CD8-positive, alpha-beta T cell (primary cell): ENCODE measurements at regions of chr9 and their contacts with region 1.

Region 1: DNA sequence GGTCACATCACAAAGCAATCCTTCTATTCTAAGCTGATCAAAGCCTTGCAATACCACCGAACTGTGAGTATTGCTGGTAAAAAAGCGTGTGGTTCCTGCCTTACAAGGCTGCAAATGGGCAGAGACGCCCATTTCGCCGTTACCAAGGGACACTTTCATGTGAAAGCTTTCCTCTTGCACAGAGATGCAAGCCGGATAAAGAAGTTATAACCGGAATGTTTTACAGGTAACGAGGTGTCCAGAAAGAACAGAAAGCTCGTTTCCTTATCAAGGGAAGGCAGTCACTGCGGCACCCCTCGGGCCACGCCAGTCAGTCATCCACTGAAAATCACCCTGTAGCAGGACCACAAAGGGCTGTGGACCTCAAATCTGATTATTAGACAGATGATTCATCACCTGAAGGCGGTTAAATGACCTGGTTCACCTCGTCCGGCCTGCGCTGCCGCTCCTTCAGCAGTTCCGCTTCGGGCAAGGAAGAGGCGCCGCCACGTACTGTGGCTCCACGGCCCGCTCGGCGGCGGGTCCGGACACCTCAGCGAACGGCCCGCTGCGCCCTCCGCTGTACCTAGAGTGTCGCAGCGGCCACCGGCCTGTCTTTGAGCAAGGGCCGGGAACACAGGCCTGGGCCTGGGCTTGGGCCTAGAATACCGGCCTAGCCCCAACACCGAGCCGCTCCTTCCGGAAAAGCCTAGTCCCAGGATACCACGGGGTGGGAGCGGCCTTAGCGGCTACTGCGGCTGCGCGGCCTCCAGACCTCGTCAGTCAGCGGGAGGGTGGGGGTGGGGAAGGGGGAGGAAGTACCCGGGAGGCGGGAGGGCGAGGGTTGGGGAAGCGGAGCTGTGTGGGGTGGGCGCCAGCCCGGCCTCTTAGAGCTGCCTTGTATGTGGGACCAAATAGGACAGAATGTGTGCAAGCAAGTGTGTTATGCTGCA is at the start of gene KLHL9:
- DNase-seq: peak; percentile 64 to 94 (median 86)
- ATAC-seq: peak; percentile 84
- H3K4me3 ChIP-seq: peak within 1 kb of the TSS; percentile 67 to 88
- H3K4me3 Mint-ChIP-seq: peak within 1 kb of the TSS; percentile 92
- H3K27ac ChIP-seq: peak within 1 kb of the TSS; percentile 93 to 96
- H3K27ac Mint-ChIP-seq: peak within 1 kb of the TSS; percentile 96
- H3K4me1 ChIP-seq: peaks cover 45% of the 10 kb centered on the region
- H3K4me1 Mint-ChIP-seq: peaks cover 56% of the 10 kb centered on the region
- H3K27me3 ChIP-seq: no peaks in the 10 kb centered on the region
- H3K27me3 Mint-ChIP-seq: no peaks in the 10 kb centered on the region
- CTCF ChIP-seq: no peak
- total RNA-seq, gene KLHL9: 11.2 to 11.4 TPM

Region 2: DNA sequence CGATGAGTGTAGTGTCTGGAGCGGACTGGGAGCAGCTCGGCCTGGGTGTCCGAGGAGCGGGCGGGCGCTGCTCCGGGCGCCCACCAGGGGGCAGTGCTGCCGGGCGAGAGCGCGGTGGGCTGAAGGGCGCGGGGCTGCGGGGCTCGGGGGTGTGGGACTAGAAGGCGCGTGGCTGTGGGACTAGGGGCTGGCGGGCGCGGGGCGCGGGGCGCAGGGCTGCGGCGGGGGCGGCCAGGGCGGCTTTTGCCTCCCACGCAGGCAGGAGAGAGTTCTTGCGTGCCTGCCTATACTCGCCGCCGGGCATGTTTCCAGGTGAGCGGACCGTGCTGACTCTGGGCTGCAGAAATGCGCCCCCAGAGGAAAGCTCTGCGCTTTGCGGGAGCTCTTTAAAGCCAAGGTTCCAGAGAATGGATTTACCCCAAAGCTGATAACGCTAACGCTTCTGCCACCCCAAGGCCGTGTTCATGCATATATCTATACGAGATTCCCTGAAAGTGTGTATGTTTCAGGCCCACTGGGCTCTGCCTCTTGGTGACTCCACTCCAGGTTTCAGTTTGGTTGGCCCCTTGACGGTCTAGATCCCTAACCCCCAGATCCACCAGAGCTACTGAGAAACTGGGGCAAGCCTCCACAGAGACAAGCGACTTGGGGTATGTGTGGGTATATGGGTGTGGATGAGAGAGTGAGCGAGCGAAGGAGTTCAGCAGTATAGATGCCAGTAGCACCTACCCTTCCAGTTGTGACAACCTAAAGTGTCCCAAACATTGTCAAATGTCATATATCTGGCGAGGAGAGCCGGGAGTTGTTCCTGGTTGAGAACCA is 1870.0 kb before region 1 on chr9:
- CTCF ChIA-PET with region 1: no interaction called
- POLR2A ChIA-PET with region 1: no interaction called
- intact Hi-C with region 1: loop called in 1 of 2 experiments (anchors 5 kb)
- DNase-seq: peak; percentile 44 to 83 (median 71)
- ATAC-seq: peak; percentile 91
- H3K4me3 ChIP-seq: peak overlapping the region; percentile 35 to 56
- H3K4me3 Mint-ChIP-seq: peak overlapping the region; percentile 89
- H3K27ac ChIP-seq: no peak overlapping the region
- H3K27ac Mint-ChIP-seq: no peak overlapping the region
- H3K4me1 ChIP-seq: peaks cover 7% of the 10 kb centered on the region
- H3K4me1 Mint-ChIP-seq: peaks cover 10% of the 10 kb centered on the region
- H3K27me3 ChIP-seq: no peaks in the 10 kb centered on the region
- H3K27me3 Mint-ChIP-seq: peaks cover 2% of the 10 kb centered on the region
- CTCF ChIP-seq: peak; percentile 80

Region 3: DNA sequence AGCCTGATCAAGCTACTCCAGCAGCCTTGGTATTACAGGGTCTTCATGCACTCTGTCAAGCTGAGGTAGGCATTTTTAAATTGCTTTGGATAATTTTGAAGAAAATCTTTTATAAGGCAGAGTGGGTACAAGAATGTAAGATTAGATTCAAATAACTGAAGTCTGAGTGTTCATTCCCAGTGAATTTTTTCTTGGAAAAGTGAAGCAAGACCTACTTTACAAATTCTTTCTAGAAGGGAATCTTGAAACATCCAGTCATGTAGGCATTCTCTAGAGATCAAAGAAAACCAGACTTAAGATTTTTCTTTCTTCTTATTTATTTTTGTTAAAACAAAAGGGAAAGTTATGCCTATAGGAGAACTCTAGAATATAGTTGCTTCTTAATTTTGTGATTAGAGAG is 511.9 kb before region 1 on chr9:
- CTCF ChIA-PET with region 1: no interaction called
- POLR2A ChIA-PET with region 1: no interaction called
- intact Hi-C with region 1: no loop called
- DNase-seq: no peak
- ATAC-seq: no peak
- H3K4me3 ChIP-seq: no peak overlapping the region
- H3K4me3 Mint-ChIP-seq: no peak overlapping the region
- H3K27ac ChIP-seq: no peak overlapping the region
- H3K27ac Mint-ChIP-seq: no peak overlapping the region
- H3K4me1 ChIP-seq: no peaks in the 10 kb centered on the region
- H3K4me1 Mint-ChIP-seq: no peaks in the 10 kb centered on the region
- H3K27me3 ChIP-seq: no peaks in the 10 kb centered on the region
- H3K27me3 Mint-ChIP-seq: no peaks in the 10 kb centered on the region
- CTCF ChIP-seq: no peak

Region 4: DNA sequence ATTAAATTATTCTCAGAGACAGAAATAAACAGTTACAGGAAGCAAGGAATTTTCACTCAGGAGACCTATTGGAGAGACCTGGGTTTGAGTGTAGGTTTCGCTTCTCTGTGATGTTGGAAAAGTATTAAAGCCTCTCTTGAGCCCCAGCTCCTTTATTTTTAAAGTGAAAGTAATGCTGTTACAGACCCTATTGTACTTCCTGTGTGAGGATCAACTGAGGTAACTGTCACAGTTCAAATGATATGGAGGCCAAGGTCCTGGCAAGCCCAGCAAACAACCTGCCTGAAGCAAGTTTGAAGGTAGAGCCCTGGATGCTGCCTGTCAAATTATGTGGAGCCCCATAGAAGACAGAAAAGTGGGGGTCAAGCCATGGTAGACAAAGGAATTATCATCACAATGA is 295.7 kb before region 1 on chr9:
- CTCF ChIA-PET with region 1: no interaction called
- POLR2A ChIA-PET with region 1: no interaction called
- intact Hi-C with region 1: loop called in 1 of 2 experiments (anchors 5 kb)
- DNase-seq: peak in 1 of 9 experiments; percentile 10
- ATAC-seq: no peak
- H3K4me3 ChIP-seq: no peak overlapping the region
- H3K4me3 Mint-ChIP-seq: no peak overlapping the region
- H3K27ac ChIP-seq: no peak overlapping the region
- H3K27ac Mint-ChIP-seq: peak overlapping the region; percentile 8
- H3K4me1 ChIP-seq: peaks cover 7% of the 10 kb centered on the region
- H3K4me1 Mint-ChIP-seq: peaks cover 9% of the 10 kb centered on the region
- H3K27me3 ChIP-seq: no peaks in the 10 kb centered on the region
- H3K27me3 Mint-ChIP-seq: no peaks in the 10 kb centered on the region
- CTCF ChIP-seq: no peak

Region 5: DNA sequence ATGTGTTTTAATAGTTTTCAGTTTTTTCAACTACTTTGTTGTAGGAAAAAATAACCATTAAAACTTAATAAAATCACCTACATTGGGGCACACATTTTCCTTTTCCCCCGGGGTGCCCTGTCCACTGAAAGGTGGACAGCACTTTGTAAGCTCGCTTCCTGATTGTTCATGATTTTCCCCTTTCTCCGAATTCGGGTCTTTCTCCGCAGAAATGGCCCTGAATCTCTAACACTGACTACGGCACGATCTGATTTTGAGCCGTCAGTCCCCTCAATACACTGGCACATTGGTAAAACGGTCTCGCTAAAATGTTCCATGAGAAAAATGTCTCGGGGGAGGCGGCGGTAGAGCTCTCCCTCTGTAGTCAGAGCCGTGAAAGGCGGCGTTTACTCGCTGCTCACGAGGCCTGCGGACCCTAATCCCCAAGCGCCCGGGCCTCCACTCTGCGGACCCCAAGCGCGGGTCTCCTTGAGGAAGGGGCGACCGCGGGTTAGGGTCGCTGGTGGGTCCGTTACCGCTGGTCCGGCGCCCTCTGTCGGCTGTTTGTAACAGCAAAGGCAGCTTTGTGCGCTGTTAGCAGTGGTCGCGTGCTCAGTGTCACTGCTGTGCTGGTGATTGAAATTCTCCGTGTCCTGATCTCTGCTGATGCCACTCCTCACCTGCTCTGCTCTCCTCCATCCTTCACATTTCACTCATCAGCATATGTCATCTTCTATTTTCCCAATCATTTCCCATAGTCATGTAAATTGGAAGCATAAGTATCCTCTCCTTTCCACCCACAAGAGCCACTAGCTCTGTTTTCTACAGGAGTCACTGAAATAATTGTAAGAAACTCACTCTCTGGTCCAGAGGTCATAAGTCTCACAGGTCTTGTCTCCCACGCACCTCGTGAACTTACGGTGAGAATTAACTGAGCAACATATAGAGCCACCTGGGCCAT is 61.1 kb after region 1 on chr9:
- CTCF ChIA-PET with region 1: interaction called, 51 read pairs
- POLR2A ChIA-PET with region 1: interaction called, 7 read pairs
- intact Hi-C with region 1: no loop called
- DNase-seq: peak; percentile 26 to 79 (median 65)
- ATAC-seq: peak; percentile 74
- H3K4me3 ChIP-seq: peak overlapping the region; percentile 40 to 52
- H3K4me3 Mint-ChIP-seq: peak overlapping the region; percentile 65
- H3K27ac ChIP-seq: no peak overlapping the region
- H3K27ac Mint-ChIP-seq: no peak overlapping the region
- H3K4me1 ChIP-seq: peaks cover 4% of the 10 kb centered on the region
- H3K4me1 Mint-ChIP-seq: peaks cover 5% of the 10 kb centered on the region
- H3K27me3 ChIP-seq: peaks cover 5 to 7% of the 10 kb centered on the region in 2 experiments
- H3K27me3 Mint-ChIP-seq: peaks cover 55% of the 10 kb centered on the region
- CTCF ChIP-seq: peak; percentile 81

Region 6: GRCh38 chr9:21802195-21803000 is 467.4 kb after region 1 on chr9 and contains the start of gene MTAP:
- CTCF ChIA-PET with region 1: no interaction called
- POLR2A ChIA-PET with region 1: no interaction called
- intact Hi-C with region 1: loop called in 1 of 2 experiments (anchors 2 kb)
- DNase-seq: peak; percentile 12 to 80 (median 65)
- ATAC-seq: peak; percentile 74
- H3K4me3 ChIP-seq: peak within 1 kb of the TSS; percentile 80 to 91
- H3K4me3 Mint-ChIP-seq: peak within 1 kb of the TSS; percentile 99
- H3K27ac ChIP-seq: peak within 1 kb of the TSS; percentile 63 to 67
- H3K27ac Mint-ChIP-seq: peak within 1 kb of the TSS; percentile 97
- H3K4me1 ChIP-seq: peaks cover 31% of the 10 kb centered on the region
- H3K4me1 Mint-ChIP-seq: peaks cover 42% of the 10 kb centered on the region
- H3K27me3 ChIP-seq: no peaks in the 10 kb centered on the region
- H3K27me3 Mint-ChIP-seq: peaks cover 5% of the 10 kb centered on the region
- CTCF ChIP-seq: no peak
- total RNA-seq, gene MTAP: 9.9 to 14.3 TPM